ENCODE measurements at regions of chr14 and their contacts with region 1.

Region 1: GRCh38 chr14:89027097-89027740 is 202.8 kb downstream of the TTC8 start:
- DNase-seq: peak; percentile 78

Region 2: DNA sequence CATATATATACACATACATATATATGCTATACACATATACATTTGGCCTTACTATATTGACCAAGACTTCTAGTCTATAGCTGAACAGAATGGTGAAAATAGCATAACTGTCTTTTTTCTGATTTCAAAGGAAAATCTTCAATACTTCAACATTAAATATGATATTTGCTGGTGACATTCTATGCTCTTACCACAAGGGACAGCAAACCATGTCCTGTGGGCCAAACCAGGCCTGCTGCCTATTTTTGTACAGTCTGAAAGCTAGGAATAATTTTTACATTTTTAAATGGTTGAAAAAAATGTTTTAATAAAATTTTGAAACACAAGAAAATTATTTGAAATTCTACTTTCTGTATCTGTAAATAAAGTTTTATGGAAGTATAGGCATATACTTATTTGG is 298.1 kb before region 1 on chr14:
- intact Hi-C with region 1: no loop called
- DNase-seq: no peak

Region 3: GRCh38 chr14:89085737-89086382 is 58.6 kb after region 1 on chr14:
- intact Hi-C with region 1: no loop called
- DNase-seq: no peak

Region 4: DNA sequence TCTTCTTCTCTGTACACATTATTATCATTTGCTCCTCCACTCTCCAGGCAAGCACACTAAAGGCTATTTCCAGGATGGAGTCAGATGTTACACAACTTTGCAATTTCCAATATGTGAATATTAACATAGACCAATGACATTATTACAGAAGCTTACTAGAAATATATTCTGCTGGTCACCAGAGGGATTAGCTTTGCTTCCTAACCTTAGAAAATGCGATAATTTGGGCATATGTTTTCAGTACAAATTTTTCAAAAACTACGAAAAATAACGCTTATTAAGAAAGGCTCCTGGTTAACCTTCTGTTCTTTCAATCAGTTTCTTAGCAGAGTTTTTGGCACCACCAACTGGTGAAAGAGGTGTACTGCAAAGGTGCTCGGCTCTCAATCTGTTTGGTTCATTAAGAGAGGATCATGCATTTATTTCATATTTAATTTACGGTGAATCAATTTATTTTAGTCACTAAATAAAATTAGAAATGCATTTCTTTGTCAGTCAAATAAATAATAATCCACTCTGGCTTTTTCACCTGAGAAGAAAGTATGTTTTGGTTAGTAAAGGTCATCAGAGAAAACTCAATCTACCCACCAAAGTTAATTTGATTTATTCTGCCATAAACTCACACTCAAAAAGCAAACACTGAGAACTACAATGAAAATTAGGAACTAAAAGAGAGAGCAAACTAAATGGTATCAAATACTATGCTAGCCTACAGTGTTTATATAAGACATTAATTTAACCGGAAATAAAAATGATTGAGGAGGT is 888.1 kb after region 1 on chr14:
- intact Hi-C with region 1: loop called (anchors 5 kb)
- DNase-seq: no peak

Region 5: GRCh38 chr14:89973234-89973823 is 946.1 kb after region 1 on chr14:
- intact Hi-C with region 1: no loop called
- DNase-seq: peak; percentile 80